GM12878 (cell line): ENCODE measurements at regions of chr6 and their contacts with region 1.

Region 1: GRCh38 chr6:159608961-159609651 is 83.9 kb downstream of the SOD2 start:
- DNase-seq: no peak
- ATAC-seq: peak; percentile 78
- H3K4me3 ChIP-seq: no peak overlapping the region
- H3K27ac ChIP-seq: no peak overlapping the region
- H3K4me1 ChIP-seq: no peaks in the 10 kb centered on the region
- H3K27me3 ChIP-seq: no peaks in the 10 kb centered on the region
- CTCF ChIP-seq: peak; percentile 65 to 73 (median 70)
- EP300 ChIP-seq: no peak
- POLR2A ChIP-seq: no peak
- RAD21 ChIP-seq: peak; percentile 90

Region 2: GRCh38 chr6:159013229-159013628 is 595.9 kb before region 1 on chr6:
- CTCF ChIA-PET with region 1: no interaction called
- POLR2A ChIA-PET with region 1: no interaction called
- RAD21 ChIA-PET with region 1: no interaction called
- SMC1A ChIA-PET with region 1: no interaction called
- in situ Hi-C with region 1: no loop called
- intact Hi-C with region 1: no loop called
- DNase-seq: no peak
- ATAC-seq: peak; percentile 26; the same call in 1 of the 3 replicates
- H3K4me3 ChIP-seq: no peak overlapping the region
- H3K27ac ChIP-seq: no peak overlapping the region
- H3K4me1 ChIP-seq: peaks cover 8% of the 10 kb centered on the region
- H3K27me3 ChIP-seq: no peaks in the 10 kb centered on the region
- CTCF ChIP-seq: no peak
- EP300 ChIP-seq: no peak
- POLR2A ChIP-seq: no peak
- RAD21 ChIP-seq: no peak

Region 3: DNA sequence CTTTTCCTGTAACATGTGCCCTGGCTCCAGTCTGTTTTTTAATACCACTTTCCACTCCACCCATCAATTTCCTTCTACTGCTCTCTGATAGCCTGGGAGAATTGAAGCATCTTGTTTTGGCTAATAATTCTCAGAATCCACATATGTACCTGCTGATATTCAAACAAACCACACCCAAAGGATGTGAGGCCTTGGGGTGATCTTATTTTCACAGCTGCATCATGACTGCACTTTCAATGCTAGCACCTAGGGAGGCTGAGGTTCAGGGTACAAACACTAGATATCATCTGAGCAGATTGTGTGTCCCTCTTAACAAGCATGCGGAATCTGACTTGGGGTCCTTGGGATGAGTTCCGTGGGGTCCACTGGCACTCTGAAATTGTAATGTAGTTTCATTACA is 427.2 kb before region 1 on chr6:
- CTCF ChIA-PET with region 1: no interaction called
- POLR2A ChIA-PET with region 1: no interaction called
- RAD21 ChIA-PET with region 1: no interaction called
- SMC1A ChIA-PET with region 1: no interaction called
- in situ Hi-C with region 1: no loop called
- intact Hi-C with region 1: loop called (anchors 5 kb)
- DNase-seq: no peak
- ATAC-seq: no peak
- H3K4me3 ChIP-seq: no peak overlapping the region
- H3K27ac ChIP-seq: no peak overlapping the region
- H3K4me1 ChIP-seq: no peaks in the 10 kb centered on the region
- H3K27me3 ChIP-seq: peaks cover 0 to 3% of the 10 kb centered on the region in 2 experiments; a peak in 1 of 4 replicates
- CTCF ChIP-seq: no peak
- EP300 ChIP-seq: no peak
- POLR2A ChIP-seq: no peak
- RAD21 ChIP-seq: no peak

Region 4: DNA sequence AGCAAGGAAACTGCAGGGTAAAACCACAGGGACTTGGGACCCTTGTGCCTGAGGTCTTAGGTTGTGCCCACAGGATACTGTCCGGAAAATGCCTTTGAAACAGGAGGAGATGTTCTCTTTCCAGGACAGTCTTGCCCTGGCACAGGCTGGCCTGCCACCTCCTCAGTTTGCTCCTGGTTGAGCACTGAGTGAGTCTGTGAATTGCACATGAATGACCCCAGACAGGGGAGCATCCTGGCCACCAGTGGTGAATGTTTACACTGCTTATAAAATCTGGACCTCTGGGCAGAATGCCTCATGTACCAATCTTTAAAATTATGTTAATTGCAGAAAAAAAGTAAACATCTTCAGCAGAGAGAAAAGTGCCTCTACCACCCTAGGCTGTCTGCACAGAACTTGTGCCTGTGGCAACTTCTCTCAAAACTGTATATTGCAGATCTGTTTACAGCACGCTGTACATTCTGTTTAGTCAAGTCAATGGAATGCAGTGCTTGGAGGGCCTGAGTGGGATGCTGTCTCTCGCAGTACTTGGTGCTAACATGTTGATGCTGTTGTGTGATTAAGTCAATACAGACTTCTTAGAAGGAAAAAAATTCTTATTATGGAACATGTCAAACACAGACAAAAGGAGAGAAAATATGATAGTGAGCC is 158.2 kb before region 1 on chr6:
- CTCF ChIA-PET with region 1: no interaction called
- POLR2A ChIA-PET with region 1: interaction called, 10 read pairs
- RAD21 ChIA-PET with region 1: no interaction called
- SMC1A ChIA-PET with region 1: no interaction called
- in situ Hi-C with region 1: no loop called
- intact Hi-C with region 1: no loop called
- DNase-seq: no peak
- ATAC-seq: no peak
- H3K4me3 ChIP-seq: no peak overlapping the region
- H3K27ac ChIP-seq: no peak overlapping the region
- H3K4me1 ChIP-seq: no peaks in the 10 kb centered on the region
- H3K27me3 ChIP-seq: peaks cover 0 to 6% of the 10 kb centered on the region in 2 experiments; a peak in 3 of 4 replicates
- CTCF ChIP-seq: no peak
- EP300 ChIP-seq: no peak
- POLR2A ChIP-seq: no peak
- RAD21 ChIP-seq: no peak

Region 5: GRCh38 chr6:159665868-159666635 is 56.9 kb after region 1 on chr6:
- CTCF ChIA-PET with region 1: no interaction called
- POLR2A ChIA-PET with region 1: no interaction called
- RAD21 ChIA-PET with region 1: no interaction called
- SMC1A ChIA-PET with region 1: no interaction called
- in situ Hi-C with region 1: no loop called
- intact Hi-C with region 1: no loop called
- DNase-seq: no peak
- ATAC-seq: no peak
- H3K4me3 ChIP-seq: no peak overlapping the region
- H3K27ac ChIP-seq: no peak overlapping the region
- H3K4me1 ChIP-seq: no peaks in the 10 kb centered on the region
- H3K27me3 ChIP-seq: no peaks in the 10 kb centered on the region
- CTCF ChIP-seq: no peak
- EP300 ChIP-seq: no peak
- POLR2A ChIP-seq: no peak
- RAD21 ChIP-seq: no peak